ENCODE measurements at regions of chr6 and their contacts with region 1.

Region 1: GRCh38 chr6:33126101-33126714 is 50.4 kb downstream of the HLA-DPB1 start:
- DNase-seq: peak; percentile 77
- H3K4me3 Mint-ChIP-seq: no peak overlapping the region
- H3K27ac Mint-ChIP-seq: no peak overlapping the region
- H3K4me1 Mint-ChIP-seq: no peaks in the 10 kb centered on the region
- H3K27me3 Mint-ChIP-seq: peaks cover 5% of the 10 kb centered on the region

Region 2: GRCh38 chr6:33136310-33136900 is 10.2 kb after region 1 on chr6:
- CTCF ChIA-PET with region 1: interaction called, 30 read pairs
- intact Hi-C with region 1: no loop called
- DNase-seq: no peak
- H3K4me3 Mint-ChIP-seq: no peak overlapping the region
- H3K27ac Mint-ChIP-seq: no peak overlapping the region
- H3K4me1 Mint-ChIP-seq: no peaks in the 10 kb centered on the region
- H3K27me3 Mint-ChIP-seq: peaks cover 10% of the 10 kb centered on the region

Region 3: GRCh38 chr6:34223956-34224940 is 1098.0 kb after region 1 on chr6:
- CTCF ChIA-PET with region 1: no interaction called
- intact Hi-C with region 1: no loop called
- DNase-seq: peak; percentile 96
- H3K4me3 Mint-ChIP-seq: peak overlapping the region; percentile 69
- H3K27ac Mint-ChIP-seq: peak overlapping the region; percentile 92
- H3K4me1 Mint-ChIP-seq: peaks cover 43% of the 10 kb centered on the region
- H3K27me3 Mint-ChIP-seq: no peaks in the 10 kb centered on the region